Posterior vena cava (tissue), 2 donors: ENCODE measurements at regions of chr3 and their contacts with region 1.

Region 1: DNA sequence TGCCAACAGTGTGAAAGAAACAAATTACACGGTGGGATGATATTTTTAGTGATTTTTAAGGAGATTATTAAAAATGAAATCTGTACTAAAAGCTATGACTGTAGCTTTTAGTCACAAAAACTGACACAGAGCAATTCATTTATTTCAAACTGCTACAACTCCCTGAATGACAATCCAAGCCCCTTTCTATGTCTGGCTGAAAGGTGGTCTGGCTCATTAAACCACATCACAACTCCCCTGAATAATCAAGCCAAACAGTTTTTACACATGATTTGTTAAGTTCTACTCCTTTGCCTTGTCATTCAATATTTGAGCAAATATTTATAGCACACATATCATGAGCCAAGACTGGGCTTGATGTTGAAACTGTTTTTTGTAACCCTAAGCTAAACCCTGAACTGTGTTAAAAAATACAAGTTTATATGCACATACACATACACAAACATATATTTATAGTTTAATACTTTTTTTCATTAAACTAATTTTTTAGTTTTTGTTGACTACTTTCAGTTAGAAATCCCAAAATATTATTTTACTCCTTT is 125.5 kb downstream of the RBMS3 start:
- DNase-seq: no peak

Region 2: DNA sequence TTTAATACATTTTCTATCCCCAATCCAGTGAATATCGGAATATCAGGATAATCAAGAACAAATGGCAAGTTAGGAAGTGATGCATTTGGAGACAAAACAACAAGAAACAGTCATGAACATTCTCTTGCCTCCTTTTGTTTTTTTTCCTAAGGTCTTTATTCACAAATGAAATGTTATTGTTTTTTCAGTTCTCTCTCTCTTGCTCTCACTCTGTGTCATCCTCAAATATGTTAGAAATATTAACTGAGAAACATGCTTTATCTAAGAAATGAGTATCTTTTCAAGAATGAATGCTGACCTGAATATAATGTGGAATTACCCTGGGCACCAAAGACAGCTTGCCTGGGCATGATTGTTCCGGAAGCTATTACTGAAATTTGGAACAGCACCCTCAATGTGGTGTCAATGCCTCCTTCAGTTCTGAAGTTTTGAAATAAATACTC is 74.1 kb before region 1 on chr3:
- intact Hi-C with region 1: loop called in 1 of 2 experiments (anchors 2 kb)
- DNase-seq: no peak